Right ventricle myocardium superior (tissue), 1 donor: ENCODE measurements at regions of chr15 and their contacts with region 1.

Region 1: GRCh38 chr15:90902040-90902839 is 862 bp upstream of the MAN2A2 start:
- DNase-seq: peak; percentile 87
- ATAC-seq: peak; percentile 90

Region 2: DNA sequence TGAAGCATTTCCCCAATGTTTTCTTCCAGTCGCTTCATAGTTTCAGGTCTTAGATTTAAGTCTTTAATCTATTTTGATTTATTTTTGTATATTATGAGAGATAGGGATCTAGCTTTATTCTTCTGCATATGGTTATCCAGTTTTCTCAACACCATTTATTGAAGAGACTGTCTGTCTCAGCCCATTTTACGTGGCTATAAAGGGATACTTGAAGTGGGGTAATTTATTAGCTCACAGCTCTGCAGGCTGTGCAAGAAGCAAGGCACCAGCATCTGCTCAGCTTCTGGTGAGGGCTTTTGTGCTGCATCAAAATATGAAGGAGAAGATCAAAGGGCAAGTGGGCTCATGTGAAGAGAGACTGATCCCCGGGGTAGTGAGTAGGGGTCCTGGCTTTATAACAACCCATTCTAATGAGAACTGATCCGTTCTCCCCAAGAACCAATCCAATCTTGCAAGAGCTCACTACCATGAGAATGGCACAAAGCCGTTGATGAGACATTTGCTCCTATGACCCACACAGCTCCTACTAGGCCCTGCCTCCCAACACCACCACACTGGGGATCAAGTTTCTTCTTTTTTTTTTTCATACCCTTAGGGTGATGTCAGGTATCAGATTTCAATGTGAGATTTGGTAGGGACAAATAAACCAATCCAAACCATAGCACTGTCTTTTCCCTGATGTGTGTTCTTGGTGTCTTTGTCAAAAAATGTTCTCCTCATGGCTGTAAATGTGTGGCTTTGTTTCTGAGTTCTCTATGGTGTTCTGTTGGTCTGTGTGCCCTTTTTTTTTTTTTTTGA is 451.0 kb before region 1 on chr15:
- intact Hi-C with region 1: no loop called
- DNase-seq: no peak
- ATAC-seq: no peak

Region 3: DNA sequence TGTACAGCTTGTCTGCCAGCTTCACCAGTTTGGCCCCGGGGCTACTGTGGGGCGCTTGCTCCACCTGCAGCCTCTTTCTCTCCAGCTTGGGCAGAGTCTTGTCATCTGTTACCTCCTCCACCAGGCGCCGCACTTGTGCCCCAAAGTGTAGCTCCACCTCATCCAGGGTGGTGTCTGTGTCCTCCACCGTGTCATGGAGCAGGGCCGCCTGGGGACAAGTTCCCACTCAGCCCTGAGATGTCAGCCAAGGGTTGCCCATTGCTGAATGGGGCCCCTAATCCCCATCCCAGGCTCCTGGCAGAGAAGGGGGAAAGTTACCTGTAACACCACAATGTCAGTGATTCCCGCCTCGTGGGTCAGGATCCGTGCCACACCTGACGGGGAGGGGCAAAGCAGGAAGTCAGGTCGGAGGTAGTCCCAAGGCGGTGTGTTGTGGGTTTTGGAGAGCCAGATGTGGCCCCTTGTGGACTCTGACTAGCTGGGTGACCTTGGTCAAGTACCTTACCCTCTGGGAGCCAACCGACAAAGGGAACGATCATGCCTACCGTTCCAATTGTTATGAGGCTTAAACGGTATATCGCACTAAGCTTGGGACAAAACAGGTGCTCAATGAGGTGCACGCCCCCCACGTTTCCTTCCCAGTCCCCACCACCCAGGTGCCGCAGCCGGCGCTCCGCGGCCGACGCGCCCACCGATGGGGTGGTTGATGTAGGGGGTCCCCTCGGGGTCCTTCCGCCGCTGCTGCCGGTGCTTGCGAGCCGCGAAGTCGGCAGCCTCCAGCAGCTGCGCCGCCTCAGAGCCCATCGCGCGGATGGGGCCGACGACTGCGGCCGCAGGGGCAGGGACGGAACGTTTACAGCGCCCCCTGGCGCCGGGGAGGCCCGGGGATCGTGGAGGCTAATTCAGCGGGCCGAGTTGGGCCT is 29.8 kb after region 1 on chr15 and contains the start of gene HDDC3:
- intact Hi-C with region 1: loop called (anchors 2 kb)
- DNase-seq: peak; percentile 95
- ATAC-seq: peak; percentile 69
- total RNA-seq, gene HDDC3: 15.5 TPM